ENCODE measurements at regions of chr9 and their contacts with region 1.

Region 1: GRCh38 chr9:9016597-9016996 is 1217.0 kb upstream of the DMAC1 start:
- DNase-seq: no peak
- H3K4me3 ChIP-seq: no peak overlapping the region
- H3K27ac ChIP-seq: no peak overlapping the region
- H3K4me1 ChIP-seq: no peaks in the 10 kb centered on the region
- H3K27me3 ChIP-seq: no peaks in the 10 kb centered on the region
- CTCF ChIP-seq: no peak
- EP300 ChIP-seq: no peak
- POLR2A ChIP-seq: no peak

Region 2: DNA sequence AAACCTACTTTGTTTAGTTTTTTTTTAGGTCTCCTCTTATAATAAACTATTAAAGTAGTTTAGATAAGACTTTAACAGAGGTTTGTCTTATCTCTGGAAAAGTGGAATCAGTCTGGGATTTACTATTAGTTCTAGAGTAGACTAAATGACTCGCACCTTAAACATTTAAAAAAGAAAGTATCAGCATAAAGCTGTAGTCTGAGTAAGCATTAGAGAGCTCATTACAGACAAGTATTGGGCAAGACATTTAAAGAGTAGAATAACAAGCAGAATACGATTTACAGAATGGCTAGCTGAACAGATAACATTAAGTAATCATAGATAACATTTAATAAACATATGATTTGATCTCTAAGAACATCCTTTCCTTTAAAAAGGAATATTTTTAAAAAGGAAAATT is 991.0 kb before region 1 on chr9:
- intact Hi-C with region 1: loop called (anchors 10 kb)
- DNase-seq: no peak
- H3K4me3 ChIP-seq: no peak overlapping the region
- H3K27ac ChIP-seq: no peak overlapping the region
- H3K4me1 ChIP-seq: no peaks in the 10 kb centered on the region
- H3K27me3 ChIP-seq: no peaks in the 10 kb centered on the region
- CTCF ChIP-seq: no peak
- EP300 ChIP-seq: no peak
- POLR2A ChIP-seq: no peak

Region 3: GRCh38 chr9:8883321-8883720 is 133.3 kb before region 1 on chr9:
- intact Hi-C with region 1: no loop called
- DNase-seq: no peak
- H3K4me3 ChIP-seq: no peak overlapping the region
- H3K27ac ChIP-seq: no peak overlapping the region
- H3K4me1 ChIP-seq: no peaks in the 10 kb centered on the region
- H3K27me3 ChIP-seq: no peaks in the 10 kb centered on the region
- CTCF ChIP-seq: no peak
- EP300 ChIP-seq: no peak
- POLR2A ChIP-seq: no peak